ENCODE measurements at regions of chr7 and their contacts with region 1.

Region 1: GRCh38 chr7:4500812-4501211 is 181.3 kb upstream of the FOXK1 start:
- DNase-seq: no peak
- ATAC-seq: no peak
- H3K4me3 ChIP-seq: no peak overlapping the region
- H3K27ac ChIP-seq: no peak overlapping the region
- H3K4me1 ChIP-seq: no peaks in the 10 kb centered on the region
- H3K27me3 ChIP-seq: no peaks in the 10 kb centered on the region
- CTCF ChIP-seq: no peak

Region 2: GRCh38 chr7:3844540-3845148 is 656.2 kb before region 1 on chr7:
- CTCF ChIA-PET with region 1: interaction called, 12 read pairs
- POLR2A ChIA-PET with region 1: no interaction called
- intact Hi-C with region 1: no loop called
- DNase-seq: no peak
- ATAC-seq: no peak
- H3K4me3 ChIP-seq: no peak overlapping the region
- H3K27ac ChIP-seq: no peak overlapping the region
- H3K4me1 ChIP-seq: no peaks in the 10 kb centered on the region
- H3K27me3 ChIP-seq: no peaks in the 10 kb centered on the region
- CTCF ChIP-seq: no peak

Measured in PC-3 (cell line).